ENCODE measurements at regions of chr10 and their contacts with region 1.

Region 1: GRCh38 chr10:86521678-86522509 is at the start of gene WAPL:
- DNase-seq: peak; percentile 97
- ATAC-seq: peak; percentile 97
- H3K4me3 Mint-ChIP-seq: peak within 1 kb of the TSS; percentile 82
- H3K27ac Mint-ChIP-seq: peak within 1 kb of the TSS; percentile 88
- H3K4me1 Mint-ChIP-seq: peaks cover 59% of the 10 kb centered on the region
- H3K27me3 Mint-ChIP-seq: no peaks in the 10 kb centered on the region
- total RNA-seq, gene WAPL: 37.4 to 43.2 TPM

Region 2: GRCh38 chr10:84845624-84846261 is 1676.2 kb before region 1 on chr10:
- CTCF ChIA-PET with region 1: no interaction called
- POLR2A ChIA-PET with region 1: no interaction called
- intact Hi-C with region 1: no loop called
- DNase-seq: peak; percentile 13
- ATAC-seq: no peak
- H3K4me3 Mint-ChIP-seq: no peak overlapping the region
- H3K27ac Mint-ChIP-seq: no peak overlapping the region
- H3K4me1 Mint-ChIP-seq: no peaks in the 10 kb centered on the region
- H3K27me3 Mint-ChIP-seq: peaks cover 2% of the 10 kb centered on the region

Region 3: DNA sequence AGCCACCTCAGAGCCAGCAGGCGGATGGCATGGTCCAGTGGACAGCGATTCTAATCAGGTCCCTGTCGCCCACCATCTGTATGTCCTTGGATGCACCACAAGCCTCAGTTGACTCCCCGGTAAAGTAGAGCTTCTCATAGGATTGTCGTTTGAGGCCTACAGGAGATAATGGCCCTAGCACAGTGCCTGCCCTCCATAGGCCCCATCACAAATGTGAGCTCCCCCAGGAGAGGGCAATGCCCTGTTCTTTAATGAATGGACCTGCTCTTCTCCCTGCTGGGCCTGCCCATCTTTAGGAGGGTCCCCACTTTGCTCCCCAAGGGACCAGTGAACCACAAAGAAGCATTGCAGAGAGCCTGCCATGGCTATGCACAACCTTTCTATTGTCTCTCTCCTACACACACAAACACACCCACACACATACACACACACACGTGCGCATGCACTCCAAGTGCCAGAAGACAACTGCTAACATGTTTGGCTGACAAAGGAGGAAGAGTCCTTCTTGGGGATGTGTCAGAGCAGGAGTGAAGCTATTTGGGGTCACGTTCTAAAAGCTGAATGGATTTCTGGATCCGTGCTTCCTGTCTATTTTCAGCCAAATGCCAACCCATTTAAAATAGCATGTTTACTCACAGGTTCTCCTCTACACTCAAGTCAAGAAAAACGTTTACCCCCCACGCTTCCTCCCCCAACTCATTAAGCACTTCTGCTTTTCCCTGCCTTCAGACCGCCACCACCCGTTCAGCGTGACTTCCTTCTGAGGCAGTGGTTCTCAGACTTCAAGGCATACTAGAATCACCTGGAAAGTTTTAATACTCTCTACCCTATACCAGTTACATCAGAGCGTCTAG is 351.4 kb before region 1 on chr10:
- CTCF ChIA-PET with region 1: no interaction called
- POLR2A ChIA-PET with region 1: no interaction called
- intact Hi-C with region 1: no loop called
- DNase-seq: no peak
- ATAC-seq: no peak
- H3K4me3 Mint-ChIP-seq: no peak overlapping the region
- H3K27ac Mint-ChIP-seq: no peak overlapping the region
- H3K4me1 Mint-ChIP-seq: no peaks in the 10 kb centered on the region
- H3K27me3 Mint-ChIP-seq: no peaks in the 10 kb centered on the region

Region 4: DNA sequence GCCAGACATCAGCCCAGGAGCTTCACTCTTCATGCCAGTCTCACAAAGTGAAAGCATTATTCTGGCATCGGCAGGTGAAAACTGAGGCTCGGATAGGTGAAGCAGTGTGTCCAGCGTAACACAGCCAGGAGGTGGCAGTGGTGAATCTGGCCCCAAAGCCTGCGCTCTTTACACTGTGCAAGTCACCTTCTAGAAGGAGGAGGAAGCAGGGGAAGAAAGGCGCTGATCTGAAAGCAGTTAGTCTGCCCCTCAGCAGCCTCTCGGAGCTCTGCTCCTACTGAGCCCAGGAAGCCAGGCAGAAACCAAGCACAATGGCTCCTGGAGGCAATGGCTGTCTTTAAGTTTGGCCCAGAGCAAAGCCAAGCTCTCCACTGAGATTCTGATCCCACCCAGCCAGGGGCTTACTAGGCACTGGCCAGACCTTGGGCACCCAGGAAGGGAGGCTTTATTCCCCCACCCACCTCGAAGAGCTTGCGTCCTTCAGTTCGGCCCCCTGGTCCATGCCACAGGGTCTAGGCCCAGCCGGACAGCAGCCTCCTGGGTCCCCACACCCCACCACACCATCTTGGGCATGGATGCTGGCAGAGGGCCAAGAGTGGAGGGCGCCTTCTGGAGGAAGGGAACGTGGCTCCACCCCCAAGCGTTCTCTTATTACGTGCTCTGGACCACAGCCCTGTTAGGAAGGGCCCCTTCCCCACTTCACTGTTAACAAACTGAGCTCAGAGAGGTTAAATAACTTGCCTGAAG is 259.8 kb before region 1 on chr10:
- CTCF ChIA-PET with region 1: no interaction called
- POLR2A ChIA-PET with region 1: no interaction called
- intact Hi-C with region 1: no loop called
- DNase-seq: peak; percentile 43
- ATAC-seq: peak; percentile 72
- H3K4me3 Mint-ChIP-seq: no peak overlapping the region
- H3K27ac Mint-ChIP-seq: no peak overlapping the region
- H3K4me1 Mint-ChIP-seq: no peaks in the 10 kb centered on the region
- H3K27me3 Mint-ChIP-seq: peaks cover 27% of the 10 kb centered on the region

Region 5: GRCh38 chr10:86504510-86504909 is 17.4 kb before region 1 on chr10:
- CTCF ChIA-PET with region 1: interaction called, 3 read pairs
- POLR2A ChIA-PET with region 1: interaction called, 4 read pairs
- intact Hi-C with region 1: loop called in 1 of 2 experiments (anchors 2 kb)
- DNase-seq: no peak
- ATAC-seq: no peak
- H3K4me3 Mint-ChIP-seq: no peak overlapping the region
- H3K27ac Mint-ChIP-seq: peak overlapping the region; percentile 43
- H3K4me1 Mint-ChIP-seq: peaks cover 49% of the 10 kb centered on the region
- H3K27me3 Mint-ChIP-seq: no peaks in the 10 kb centered on the region

Region 6: GRCh38 chr10:86535057-86535882 is 13.4 kb after region 1 on chr10:
- CTCF ChIA-PET with region 1: interaction called, 8 read pairs
- POLR2A ChIA-PET with region 1: interaction called, 4 read pairs
- intact Hi-C with region 1: loop called (anchors 1 to 2 kb)
- DNase-seq: peak; percentile 60
- ATAC-seq: peak; percentile 67
- H3K4me3 Mint-ChIP-seq: peak overlapping the region; percentile 69
- H3K27ac Mint-ChIP-seq: peak overlapping the region; percentile 80
- H3K4me1 Mint-ChIP-seq: peaks cover 25% of the 10 kb centered on the region
- H3K27me3 Mint-ChIP-seq: no peaks in the 10 kb centered on the region

Region 7: DNA sequence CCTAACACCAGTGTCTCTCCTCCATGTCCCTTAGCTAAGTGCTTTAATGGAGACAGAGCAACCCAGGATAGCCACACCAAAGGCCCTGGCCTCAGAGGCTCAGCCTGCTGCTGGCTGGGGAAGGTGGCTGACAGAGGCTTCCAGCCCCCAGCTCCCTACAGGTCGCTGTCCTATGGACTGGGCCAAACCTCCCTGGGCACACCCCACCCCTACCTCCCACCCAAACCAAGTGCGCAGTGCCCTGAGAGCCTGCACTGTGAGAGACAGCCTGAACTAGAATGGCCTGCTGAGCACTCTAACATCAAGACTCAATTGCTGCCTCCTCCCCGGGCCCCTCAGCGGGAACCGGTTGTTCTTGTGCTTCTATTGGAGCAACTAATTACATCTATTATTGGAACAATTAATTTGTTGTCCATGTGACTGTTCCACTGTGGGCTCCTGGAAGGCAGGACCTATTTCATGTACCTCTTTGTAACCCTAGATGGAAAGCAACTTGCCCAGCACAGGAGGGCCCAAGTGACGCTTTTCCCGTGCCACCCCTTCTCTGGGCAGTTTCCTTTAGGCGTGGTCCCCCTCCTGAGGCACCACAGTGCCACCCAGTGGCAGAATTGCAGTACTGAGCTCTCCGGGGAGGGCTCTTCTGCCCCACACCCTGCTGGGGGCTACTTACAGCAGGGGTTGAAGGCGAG is 63.3 kb after region 1 on chr10:
- CTCF ChIA-PET with region 1: interaction called, 4 read pairs
- POLR2A ChIA-PET with region 1: no interaction called
- intact Hi-C with region 1: loop called (anchors 1 to 2 kb)
- DNase-seq: peak; percentile 85
- ATAC-seq: peak; percentile 98
- H3K4me3 Mint-ChIP-seq: no peak overlapping the region
- H3K27ac Mint-ChIP-seq: no peak overlapping the region
- H3K4me1 Mint-ChIP-seq: peaks cover 2% of the 10 kb centered on the region
- H3K27me3 Mint-ChIP-seq: no peaks in the 10 kb centered on the region

Region 8: DNA sequence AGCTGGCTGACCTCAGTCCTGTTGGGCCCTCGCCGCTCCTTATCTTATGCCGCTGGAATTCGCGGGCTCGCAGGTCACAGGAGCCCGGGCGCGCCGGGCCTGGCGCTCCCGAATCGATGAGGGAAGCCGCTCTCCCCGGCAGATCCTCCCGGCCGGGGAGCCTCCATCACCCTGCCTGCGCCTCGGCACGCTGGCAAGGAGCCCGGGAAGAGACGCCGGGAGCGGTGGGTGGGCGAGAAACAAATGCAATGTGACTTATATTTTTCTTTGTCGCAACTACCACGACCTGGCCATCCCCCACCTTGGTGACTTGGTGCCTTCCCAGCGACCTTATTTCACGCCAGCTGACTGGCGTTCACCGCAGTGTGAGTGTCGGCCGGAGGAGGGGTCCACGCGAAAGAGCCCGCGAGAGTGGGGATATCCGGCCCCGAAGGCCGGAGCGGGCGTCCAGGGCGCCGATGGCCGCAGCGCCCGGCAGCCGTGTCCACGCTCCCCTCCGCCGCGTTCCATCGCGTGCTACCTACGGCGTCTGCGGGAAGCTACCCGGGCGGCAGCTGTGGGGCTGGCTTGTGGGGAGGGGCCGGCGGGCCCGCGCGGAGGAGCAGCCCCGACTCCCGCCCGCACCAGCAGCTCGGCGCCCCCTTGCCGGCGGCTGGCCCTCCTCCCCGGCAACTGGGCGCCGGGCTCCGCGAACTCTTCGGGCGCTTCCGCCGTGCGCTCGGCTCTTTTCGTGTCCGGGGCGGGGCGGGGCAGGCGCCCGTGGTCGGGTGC is 234.0 kb after region 1 on chr10:
- CTCF ChIA-PET with region 1: no interaction called
- POLR2A ChIA-PET with region 1: no interaction called
- intact Hi-C with region 1: loop called in 1 of 2 experiments (anchors 1 kb)
- DNase-seq: peak; percentile 93
- ATAC-seq: peak; percentile 96
- H3K4me3 Mint-ChIP-seq: peak overlapping the region; percentile 85
- H3K27ac Mint-ChIP-seq: peak overlapping the region; percentile 72
- H3K4me1 Mint-ChIP-seq: peaks cover 33% of the 10 kb centered on the region
- H3K27me3 Mint-ChIP-seq: peaks cover 26% of the 10 kb centered on the region

Measured in activated CD4-positive, alpha-beta T cell treated with anti-CD3 and anti-CD28 coated beads for 36 hours (primary cell).